ENCODE measurements at regions of chr17 and their contacts with region 1.

Region 1: DNA sequence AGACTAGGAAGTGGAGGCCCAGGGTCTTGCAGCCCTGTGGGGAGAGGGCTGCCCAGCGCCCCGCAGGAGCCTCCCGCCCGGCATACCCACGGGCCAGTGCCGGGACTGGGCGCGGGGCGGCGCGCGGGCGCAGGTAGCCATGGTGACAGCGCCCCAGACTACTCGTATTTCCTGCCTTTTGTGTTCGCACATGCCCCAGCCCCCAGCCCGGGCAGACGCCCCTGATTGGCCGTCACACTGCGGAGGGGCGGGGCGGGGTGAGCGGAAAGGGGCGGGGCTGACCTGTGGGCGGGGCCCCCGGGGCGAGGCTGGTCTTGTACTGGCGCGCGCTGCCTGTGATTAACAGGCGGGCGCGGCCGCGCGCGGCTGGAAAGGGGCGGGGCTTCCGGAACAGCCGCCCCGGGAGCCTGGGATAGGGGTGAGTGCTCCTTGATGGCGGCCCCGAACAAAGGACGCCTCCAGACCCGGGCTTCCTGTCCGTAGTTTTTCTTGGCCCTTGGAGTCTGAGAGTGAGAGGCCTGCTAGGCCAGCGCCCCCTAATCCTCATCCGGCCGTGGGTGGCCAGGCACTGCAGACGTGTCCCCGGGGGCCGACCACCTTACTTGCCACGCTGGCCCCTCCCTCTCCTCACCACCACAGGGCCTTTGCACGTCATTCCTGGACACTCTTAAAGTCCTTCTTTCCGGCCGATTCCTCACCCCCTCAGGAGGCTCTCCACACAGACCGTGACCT is 71.0 kb downstream of the RAI1 start:
- DNase-seq: peak; percentile 74
- ATAC-seq: peak; percentile 91
- H3K4me3 ChIP-seq: peak overlapping the region; percentile 77
- H3K27ac ChIP-seq: peak overlapping the region; percentile 83
- H3K4me1 ChIP-seq: peaks cover 55% of the 10 kb centered on the region
- H3K27me3 ChIP-seq: no peaks in the 10 kb centered on the region
- CTCF ChIP-seq: peak; percentile 26 to 57 (median 46); a peak in 4 of 6 replicates
- EP300 ChIP-seq: no peak
- POLR2A ChIP-seq: peak; percentile 67
- RAD21 ChIP-seq: no peak

Region 2: DNA sequence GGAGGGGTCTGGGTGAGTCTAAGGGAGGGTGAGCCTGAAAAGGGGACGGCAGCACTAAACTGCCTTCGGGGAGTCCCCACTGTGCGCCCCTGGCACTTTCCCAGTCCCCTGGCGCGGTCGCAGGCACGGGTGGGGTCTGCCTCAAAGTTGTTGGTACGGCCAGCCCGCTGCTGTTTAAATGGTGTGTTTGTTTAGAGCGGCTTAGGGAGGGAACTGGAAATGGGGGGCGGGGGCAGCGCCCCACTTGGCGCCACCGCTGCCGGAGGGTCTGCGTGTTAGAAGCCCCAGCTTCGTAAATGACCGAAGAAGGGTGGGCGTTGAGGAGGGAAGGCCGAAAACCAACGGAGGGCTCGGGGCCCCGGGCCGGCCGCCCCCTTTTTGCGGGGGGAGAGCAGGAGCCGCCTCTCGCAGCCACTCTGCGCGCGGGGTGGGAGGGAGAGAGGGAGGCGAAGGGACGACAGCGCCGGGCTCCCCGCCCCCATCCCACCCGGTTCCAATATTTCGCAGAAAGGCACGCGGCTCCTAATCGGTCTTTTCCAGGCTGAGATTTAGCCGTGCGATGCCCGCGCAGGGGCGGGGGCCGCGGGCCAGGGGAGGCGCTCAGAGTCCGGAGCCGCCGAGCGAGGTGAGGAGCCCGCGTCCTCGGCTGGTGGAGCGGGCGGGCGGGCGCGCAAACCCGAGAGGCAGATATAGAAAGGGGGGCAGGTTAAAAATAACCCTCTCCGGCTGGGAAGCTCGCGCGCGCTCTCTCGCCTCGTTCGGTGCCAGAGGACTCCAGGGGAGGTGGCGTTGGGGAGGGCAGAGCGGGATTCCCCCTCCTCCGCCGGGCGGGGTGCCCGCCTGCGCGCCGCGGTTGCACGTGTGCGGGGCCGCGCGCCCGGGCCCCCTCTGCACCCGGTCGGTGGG is 29.6 kb after region 1 on chr17:
- CTCF ChIA-PET with region 1: interaction called, 3 read pairs
- POLR2A ChIA-PET with region 1: no interaction called
- RAD21 ChIA-PET with region 1: no interaction called
- SMC1A ChIA-PET with region 1: no interaction called
- in situ Hi-C with region 1: no loop called
- intact Hi-C with region 1: loop called (anchors 1 kb)
- DNase-seq: no peak
- ATAC-seq: peak; percentile 27
- H3K4me3 ChIP-seq: peak overlapping the region; percentile 65; the same call in 1 of the 2 replicates
- H3K27ac ChIP-seq: no peak overlapping the region
- H3K4me1 ChIP-seq: peaks cover 11% of the 10 kb centered on the region
- H3K27me3 ChIP-seq: no peaks in the 10 kb centered on the region
- CTCF ChIP-seq: no peak
- EP300 ChIP-seq: no peak
- POLR2A ChIP-seq: no peak
- RAD21 ChIP-seq: no peak

Region 3: DNA sequence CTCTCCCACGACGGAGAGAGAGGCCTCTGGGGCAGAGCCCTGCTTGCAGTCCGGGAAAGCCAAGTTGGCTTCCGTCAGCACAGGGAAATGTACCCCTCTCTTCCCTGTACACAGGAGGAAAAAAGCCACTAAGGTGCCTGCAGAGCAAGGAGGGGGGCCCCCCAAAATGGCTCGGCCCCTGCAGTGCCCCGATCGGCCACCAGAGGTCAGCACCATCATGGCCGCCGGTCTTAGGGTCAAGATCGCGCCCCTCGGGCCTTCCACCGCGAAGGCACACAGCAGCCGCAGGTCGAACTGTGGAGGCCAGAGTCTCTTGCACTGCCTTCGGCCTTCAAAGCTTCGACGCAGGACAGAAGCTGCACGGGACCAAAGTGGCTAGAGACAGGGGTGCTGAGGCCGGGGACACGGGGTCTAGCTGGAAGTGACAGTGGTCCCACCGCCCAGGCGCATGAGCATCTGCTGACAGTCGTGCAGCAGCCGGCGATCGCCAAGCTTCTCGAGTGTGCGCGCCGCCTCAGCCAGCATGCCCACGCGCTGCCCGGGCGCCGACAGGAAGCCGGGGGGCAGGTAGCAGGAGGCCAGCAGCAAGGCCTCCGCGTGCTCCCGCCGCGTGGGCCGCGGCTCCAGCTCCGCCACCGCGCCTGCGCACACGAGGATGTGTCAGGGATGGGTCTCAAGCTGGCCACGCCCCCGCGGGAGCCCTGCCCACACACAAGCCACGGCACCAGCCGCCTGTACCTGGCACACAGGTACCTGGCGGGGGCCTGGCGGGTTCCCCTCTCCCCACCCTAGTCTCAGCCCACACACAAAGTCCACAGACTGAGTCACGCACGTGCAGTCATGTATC is 60.2 kb after region 1 on chr17:
- CTCF ChIA-PET with region 1: no interaction called
- POLR2A ChIA-PET with region 1: no interaction called
- RAD21 ChIA-PET with region 1: no interaction called
- SMC1A ChIA-PET with region 1: no interaction called
- in situ Hi-C with region 1: no loop called
- intact Hi-C with region 1: no loop called
- DNase-seq: no peak
- ATAC-seq: peak; percentile 77
- H3K4me3 ChIP-seq: no peak overlapping the region
- H3K27ac ChIP-seq: no peak overlapping the region
- H3K4me1 ChIP-seq: peaks cover 8% of the 10 kb centered on the region
- H3K27me3 ChIP-seq: no peaks in the 10 kb centered on the region
- CTCF ChIP-seq: peak; percentile 97 to 99 (median 98); a peak in 5 of 6 replicates
- EP300 ChIP-seq: no peak
- POLR2A ChIP-seq: no peak
- RAD21 ChIP-seq: peak; percentile 74

Measured in GM12878 (cell line).